IMR-90 (cell line): ENCODE measurements at regions of chr17 and their contacts with region 1.

Region 1: GRCh38 chr17:60827943-60828342 is 150.3 kb downstream of the BCAS3 start:
- DNase-seq: no peak
- ATAC-seq: no peak
- H3K4me3 ChIP-seq: no peak overlapping the region
- H3K27ac ChIP-seq: no peak overlapping the region
- H3K4me1 ChIP-seq: no peaks in the 10 kb centered on the region
- H3K27me3 ChIP-seq: no peaks in the 10 kb centered on the region
- CTCF ChIP-seq: no peak
- POLR2A ChIP-seq: no peak
- RAD21 ChIP-seq: no peak

Region 2: DNA sequence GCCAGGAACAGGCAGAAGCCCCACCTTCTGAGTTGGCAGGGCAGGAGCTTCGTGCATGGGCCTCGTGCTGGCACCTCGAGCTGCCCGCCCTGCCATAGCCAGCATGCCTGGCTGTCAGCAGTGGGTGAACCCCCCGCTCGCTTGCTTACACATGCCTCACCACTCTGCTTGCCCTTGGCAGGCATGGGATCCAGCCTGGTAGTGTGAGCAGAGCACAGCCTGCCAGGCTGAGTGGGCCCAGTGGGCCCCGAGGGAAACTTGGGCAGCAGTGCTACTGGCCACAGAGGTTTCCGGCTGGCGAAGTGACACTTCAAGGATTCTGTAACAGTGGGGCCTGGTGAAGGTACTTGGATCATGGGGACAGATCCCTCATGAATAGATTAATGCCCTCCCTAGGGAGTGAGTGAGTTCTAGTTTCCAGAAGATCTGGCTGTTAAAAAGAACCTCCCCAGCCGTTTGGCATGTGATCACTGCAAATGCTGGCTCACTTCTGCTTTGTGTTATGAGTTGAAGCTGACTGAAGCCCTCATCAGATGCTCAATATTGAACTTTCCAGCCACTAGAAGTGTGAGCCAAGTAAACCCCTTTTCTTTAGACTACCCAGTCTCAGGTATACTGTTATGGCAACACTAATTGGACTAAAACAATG is 35.6 kb before region 1 on chr17:
- CTCF ChIA-PET with region 1: no interaction called
- POLR2A ChIA-PET with region 1: no interaction called
- dilution Hi-C with region 1: no loop called
- in situ Hi-C with region 1: no loop called
- intact Hi-C with region 1: loop called (anchors 5 kb)
- DNase-seq: no peak
- ATAC-seq: no peak
- H3K4me3 ChIP-seq: no peak overlapping the region
- H3K27ac ChIP-seq: no peak overlapping the region
- H3K4me1 ChIP-seq: no peaks in the 10 kb centered on the region
- H3K27me3 ChIP-seq: no peaks in the 10 kb centered on the region
- CTCF ChIP-seq: no peak
- POLR2A ChIP-seq: no peak
- RAD21 ChIP-seq: no peak

Region 3: GRCh38 chr17:61451538-61452300 is 623.8 kb after region 1 on chr17:
- CTCF ChIA-PET with region 1: no interaction called
- POLR2A ChIA-PET with region 1: no interaction called
- dilution Hi-C with region 1: no loop called
- in situ Hi-C with region 1: no loop called
- intact Hi-C with region 1: no loop called
- DNase-seq: no peak
- ATAC-seq: no peak
- H3K4me3 ChIP-seq: no peak overlapping the region
- H3K27ac ChIP-seq: no peak overlapping the region
- H3K4me1 ChIP-seq: no peaks in the 10 kb centered on the region
- H3K27me3 ChIP-seq: peaks cover 78% of the 10 kb centered on the region
- CTCF ChIP-seq: no peak
- POLR2A ChIP-seq: no peak
- RAD21 ChIP-seq: no peak

Region 4: GRCh38 chr17:61728387-61728786 is 900.4 kb after region 1 on chr17:
- CTCF ChIA-PET with region 1: no interaction called
- POLR2A ChIA-PET with region 1: interaction called, 12 read pairs
- dilution Hi-C with region 1: no loop called
- in situ Hi-C with region 1: no loop called
- intact Hi-C with region 1: no loop called
- DNase-seq: no peak
- ATAC-seq: no peak
- H3K4me3 ChIP-seq: no peak overlapping the region
- H3K27ac ChIP-seq: no peak overlapping the region
- H3K4me1 ChIP-seq: no peaks in the 10 kb centered on the region
- H3K27me3 ChIP-seq: no peaks in the 10 kb centered on the region
- CTCF ChIP-seq: no peak
- POLR2A ChIP-seq: no peak
- RAD21 ChIP-seq: no peak